Heart left ventricle (tissue), 16 donors: ENCODE measurements at regions of chr11 and their contacts with region 1.

Region 1: DNA sequence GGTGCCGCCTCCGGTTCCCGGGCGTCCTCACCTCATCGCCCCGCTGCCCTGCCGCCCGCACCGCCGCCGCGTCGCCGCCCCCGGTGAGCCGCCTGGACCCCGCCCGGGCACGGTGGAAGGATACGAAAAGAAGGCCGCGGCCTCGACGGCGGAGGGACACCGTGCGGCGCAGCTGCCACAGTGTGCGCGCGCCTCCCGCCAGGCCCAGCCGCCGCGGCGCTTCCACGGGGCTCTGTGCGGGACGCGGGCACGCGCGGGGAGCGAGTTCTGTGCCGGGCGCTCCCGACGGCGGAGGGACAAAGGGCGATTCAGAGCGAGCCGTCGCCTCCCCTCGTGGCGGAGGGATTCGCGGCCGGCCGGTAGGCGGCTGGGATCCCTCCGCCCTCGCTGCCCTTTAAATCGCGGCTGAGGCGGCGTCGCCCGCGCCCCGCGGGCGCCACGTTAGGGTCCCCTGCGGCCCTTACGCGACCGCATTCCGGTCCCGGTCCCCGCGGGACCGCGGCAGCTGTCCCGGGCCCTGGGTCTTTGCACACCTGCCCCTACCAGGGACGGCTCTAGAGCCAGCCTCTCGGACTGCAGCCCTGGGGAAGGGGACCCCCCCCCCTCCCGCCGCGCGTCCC is 569 bp upstream of the KMT5B start:
- DNase-seq: peak; percentile 92 to 94 (median 94)
- ATAC-seq: peak; percentile 18 to 70 (median 63)
- H3K4me3 ChIP-seq: peak overlapping the region; percentile 71 to 96 (median 84)
- H3K27ac ChIP-seq: peak overlapping the region; percentile 95 to 100 (median 99)
- H3K4me1 ChIP-seq: peaks cover 0 to 57% (median 45%) of the 10 kb centered on the region in 12 donors
- H3K27me3 ChIP-seq: no peaks in the 10 kb centered on the region
- CTCF ChIP-seq: peak in 2 of 12 donors; percentile 8 to 15
- POLR2A ChIP-seq: peak; percentile 88 to 96

Region 2: GRCh38 chr11:68030318-68031138 is 183.1 kb before region 1 on chr11 and contains the start of gene NDUFS8:
- intact Hi-C with region 1: loop called in 4 of 10 experiments (anchors 5 to 10 kb)
- DNase-seq: peak; percentile 95 to 98 (median 97)
- ATAC-seq: peak; percentile 90 to 96 (median 94)
- H3K4me3 ChIP-seq: peak within 1 kb of the TSS; percentile 63 to 94 (median 85)
- H3K27ac ChIP-seq: peak within 1 kb of the TSS; percentile 85 to 98 (median 93)
- H3K4me1 ChIP-seq: peaks cover 0 to 46% (median 30%) of the 10 kb centered on the region in 12 donors
- H3K27me3 ChIP-seq: no peaks in the 10 kb centered on the region
- CTCF ChIP-seq: no peak
- POLR2A ChIP-seq: peak in 1 of 2 donors; percentile 71
- total RNA-seq, gene NDUFS8: 262 to 948 (median 365) TPM

Region 3: DNA sequence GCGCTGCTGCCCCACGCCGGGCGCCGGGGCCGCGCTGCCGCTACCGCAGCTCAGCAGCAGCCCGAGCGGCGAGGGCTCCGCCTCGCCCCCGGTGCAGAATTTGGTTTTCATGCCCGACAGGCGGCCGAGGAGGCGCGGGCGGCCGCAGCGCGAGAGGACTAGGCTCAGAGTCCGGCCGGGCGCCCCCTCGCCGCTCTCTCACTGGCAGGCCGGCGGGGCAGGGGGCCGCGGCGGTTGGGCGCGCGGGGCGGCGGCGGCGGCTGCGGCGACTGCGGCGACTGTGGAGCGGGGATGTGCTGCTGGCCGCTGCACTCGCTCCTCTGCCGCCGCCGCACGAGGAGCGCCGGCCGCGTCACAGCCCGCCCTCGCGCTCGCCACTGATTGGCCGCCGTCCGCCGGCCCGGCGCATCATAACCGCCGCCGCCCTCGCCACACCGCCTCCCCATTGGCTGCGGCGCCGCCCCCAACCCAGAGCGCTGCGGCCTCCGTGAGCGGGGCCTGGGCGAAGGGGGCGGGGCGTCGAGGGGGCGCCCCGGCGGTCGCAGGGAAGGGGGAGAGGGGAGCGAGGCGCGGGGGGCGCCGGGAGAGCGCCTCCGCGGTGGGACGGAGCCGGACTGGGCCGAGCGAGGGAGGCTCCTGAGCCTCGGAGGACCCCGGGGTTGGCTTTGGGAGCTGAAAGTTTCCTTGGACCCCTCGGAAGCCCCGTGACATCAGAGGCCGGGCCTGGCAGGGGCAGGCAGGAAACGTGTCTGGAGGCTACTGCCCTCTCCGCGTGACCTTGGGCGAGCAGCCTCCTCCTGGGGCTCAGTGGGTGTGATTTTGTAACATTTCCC is 92.4 kb before region 1 on chr11 and contains the start of gene CHKA:
- intact Hi-C with region 1: loop called in 2 of 10 experiments (anchors 5 kb)
- DNase-seq: peak; percentile 94 to 97 (median 95)
- ATAC-seq: peak; percentile 85 to 97 (median 95)
- H3K4me3 ChIP-seq: peak within 1 kb of the TSS; percentile 38 to 87 (median 76)
- H3K27ac ChIP-seq: peak within 1 kb of the TSS; percentile 91 to 100 (median 99)
- H3K4me1 ChIP-seq: peaks cover 0 to 54% (median 39%) of the 10 kb centered on the region in 12 donors
- H3K27me3 ChIP-seq: no peaks in the 10 kb centered on the region
- CTCF ChIP-seq: peak in 2 of 12 donors; percentile 15 to 24
- POLR2A ChIP-seq: peak; percentile 65 to 83
- total RNA-seq, gene CHKA: 6.1 to 15.0 (median 8.2) TPM

Region 4: GRCh38 chr11:68146704-68147474 is 66.8 kb before region 1 on chr11:
- intact Hi-C with region 1: no loop called
- DNase-seq: peak in 4 of 5 donors; percentile 29 to 69 (median 50)
- ATAC-seq: peak; percentile 43 to 76 (median 68)
- H3K4me3 ChIP-seq: no peak overlapping the region
- H3K27ac ChIP-seq: peak overlapping the region; percentile 67 to 82 (median 78)
- H3K4me1 ChIP-seq: peaks cover 0 to 34% (median 19%) of the 10 kb centered on the region in 12 donors
- H3K27me3 ChIP-seq: no peaks in the 10 kb centered on the region
- CTCF ChIP-seq: no peak
- POLR2A ChIP-seq: no peak

Region 5: GRCh38 chr11:68297812-68298658 is 84.4 kb after region 1 on chr11:
- intact Hi-C with region 1: loop called in 3 of 10 experiments (anchors 5 to 10 kb)
- DNase-seq: peak; percentile 77 to 92 (median 80)
- ATAC-seq: peak; percentile 93 to 97 (median 96)
- H3K4me3 ChIP-seq: peak overlapping the region in 5 of 12 donors; percentile 3 to 28 (median 10)
- H3K27ac ChIP-seq: no peak overlapping the region
- H3K4me1 ChIP-seq: peaks cover 0 to 22% (median 12%) of the 10 kb centered on the region in 12 donors
- H3K27me3 ChIP-seq: no peaks in the 10 kb centered on the region
- CTCF ChIP-seq: peak in 11 of 12 donors; percentile 94 to 99 (median 98)
- POLR2A ChIP-seq: no peak

Region 6: GRCh38 chr11:68398995-68399851 is 185.6 kb after region 1 on chr11:
- intact Hi-C with region 1: loop called in 1 of 10 experiments (anchors 5 kb)
- DNase-seq: peak; percentile 81 to 91 (median 85)
- ATAC-seq: peak; percentile 84 to 86 (median 84)
- H3K4me3 ChIP-seq: peak overlapping the region in 1 of 12 donors; percentile 4
- H3K27ac ChIP-seq: peak overlapping the region; percentile 64 to 91 (median 84)
- H3K4me1 ChIP-seq: peaks cover 9 to 54% (median 33%) of the 10 kb centered on the region in 12 donors
- H3K27me3 ChIP-seq: no peaks in the 10 kb centered on the region
- CTCF ChIP-seq: no peak
- POLR2A ChIP-seq: no peak